ENCODE measurements at regions of chr5 and their contacts with region 1.

Region 1: GRCh38 chr5:74766849-74767578 is at the starts of genes GFM2 and NSA2:
- DNase-seq: peak; percentile 95
- ATAC-seq: peak; percentile 85
- H3K4me3 Mint-ChIP-seq: peak within 1 kb of the TSS; percentile 94
- H3K27ac Mint-ChIP-seq: peak within 1 kb of the TSS; percentile 99
- H3K4me1 Mint-ChIP-seq: peaks cover 34% of the 10 kb centered on the region
- H3K27me3 Mint-ChIP-seq: no peaks in the 10 kb centered on the region
- total RNA-seq, gene GFM2: 34.7 to 40.4 TPM
- total RNA-seq, gene NSA2: 163 to 253 TPM

Region 2: DNA sequence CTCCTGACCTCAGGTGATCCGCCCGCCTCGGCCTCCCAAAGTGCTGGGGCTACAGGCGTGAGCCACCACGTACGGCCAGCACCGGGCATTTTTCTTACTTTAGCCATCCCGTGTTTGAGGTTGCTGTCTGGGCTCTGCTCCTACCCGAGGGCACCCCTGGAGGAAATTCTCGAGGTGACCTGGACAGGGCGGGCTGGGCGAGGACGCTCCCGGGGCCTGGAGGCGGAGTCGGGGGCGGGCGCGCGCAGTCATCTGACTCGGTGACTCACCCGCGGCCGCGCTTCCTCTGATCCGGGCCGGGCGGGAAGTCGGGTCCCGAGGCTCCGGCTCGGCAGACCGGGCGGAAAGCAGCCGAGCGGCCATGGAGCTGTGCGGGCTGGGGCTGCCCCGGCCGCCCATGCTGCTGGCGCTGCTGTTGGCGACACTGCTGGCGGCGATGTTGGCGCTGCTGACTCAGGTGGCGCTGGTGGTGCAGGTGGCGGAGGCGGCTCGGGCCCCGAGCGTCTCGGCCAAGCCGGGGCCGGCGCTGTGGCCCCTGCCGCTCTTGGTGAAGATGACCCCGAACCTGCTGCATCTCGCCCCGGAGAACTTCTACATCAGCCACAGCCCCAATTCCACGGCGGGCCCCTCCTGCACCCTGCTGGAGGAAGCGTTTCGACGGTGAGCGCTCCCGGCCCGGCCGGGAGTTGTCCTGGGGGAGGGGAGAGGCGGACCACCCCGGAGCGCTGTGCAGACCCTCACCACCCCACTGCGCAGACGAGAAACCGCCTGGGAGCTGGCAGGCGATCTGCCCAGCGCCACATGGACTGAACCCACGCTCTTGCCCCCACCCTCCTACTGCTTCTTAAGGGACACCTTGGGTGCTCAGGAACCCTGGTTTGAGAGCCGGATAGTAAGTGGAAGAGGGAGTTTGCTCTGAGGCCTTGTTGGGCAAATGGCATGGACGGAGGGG is 81.8 kb before region 1 on chr5 and contains the start of gene HEXB:
- CTCF ChIA-PET with region 1: interaction called, 3 read pairs
- POLR2A ChIA-PET with region 1: interaction called, 4 read pairs
- intact Hi-C with region 1: loop called (anchors 1 to 2 kb)
- DNase-seq: peak; percentile 94
- ATAC-seq: peak; percentile 98
- H3K4me3 Mint-ChIP-seq: peak within 1 kb of the TSS; percentile 73
- H3K27ac Mint-ChIP-seq: peak within 1 kb of the TSS; percentile 87
- H3K4me1 Mint-ChIP-seq: peaks cover 21% of the 10 kb centered on the region
- H3K27me3 Mint-ChIP-seq: no peaks in the 10 kb centered on the region
- total RNA-seq, gene HEXB: 42.6 to 47.6 TPM

Region 3: GRCh38 chr5:74865804-74866595 is 99.0 kb after region 1 on chr5 and contains the start of gene FAM169A:
- CTCF ChIA-PET with region 1: no interaction called
- POLR2A ChIA-PET with region 1: no interaction called
- intact Hi-C with region 1: loop called (anchors 1 to 5 kb)
- DNase-seq: peak; percentile 65
- ATAC-seq: peak; percentile 69
- H3K4me3 Mint-ChIP-seq: peak within 1 kb of the TSS; percentile 92
- H3K27ac Mint-ChIP-seq: peak within 1 kb of the TSS; percentile 95
- H3K4me1 Mint-ChIP-seq: peaks cover 29% of the 10 kb centered on the region
- H3K27me3 Mint-ChIP-seq: peaks cover 2% of the 10 kb centered on the region
- total RNA-seq, gene FAM169A: 6.1 to 9.1 TPM

Region 4: DNA sequence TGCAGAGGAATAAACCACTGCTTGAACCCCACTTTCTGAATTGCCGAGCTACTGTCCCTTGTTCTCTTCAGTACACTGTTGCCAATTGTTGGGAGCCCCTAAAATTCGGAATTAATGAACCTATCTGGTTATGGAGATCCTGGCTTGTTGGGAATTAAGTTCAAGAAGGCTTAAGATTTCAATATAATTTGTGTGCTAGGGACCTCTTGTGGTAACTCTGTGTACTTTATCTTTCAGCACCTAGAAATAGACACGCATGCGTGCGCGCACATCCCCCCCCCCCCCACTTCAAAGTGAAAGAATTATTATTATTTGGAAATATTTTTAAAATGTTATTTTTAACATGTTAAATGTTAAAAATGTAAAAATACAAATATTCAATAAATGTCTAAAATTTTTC is 152.5 kb after region 1 on chr5:
- CTCF ChIA-PET with region 1: interaction called, 7 read pairs
- POLR2A ChIA-PET with region 1: no interaction called
- intact Hi-C with region 1: loop called (anchors 1 kb)
- DNase-seq: peak; percentile 20
- ATAC-seq: no peak
- H3K4me3 Mint-ChIP-seq: no peak overlapping the region
- H3K27ac Mint-ChIP-seq: no peak overlapping the region
- H3K4me1 Mint-ChIP-seq: no peaks in the 10 kb centered on the region
- H3K27me3 Mint-ChIP-seq: peaks cover 7% of the 10 kb centered on the region

Region 5: DNA sequence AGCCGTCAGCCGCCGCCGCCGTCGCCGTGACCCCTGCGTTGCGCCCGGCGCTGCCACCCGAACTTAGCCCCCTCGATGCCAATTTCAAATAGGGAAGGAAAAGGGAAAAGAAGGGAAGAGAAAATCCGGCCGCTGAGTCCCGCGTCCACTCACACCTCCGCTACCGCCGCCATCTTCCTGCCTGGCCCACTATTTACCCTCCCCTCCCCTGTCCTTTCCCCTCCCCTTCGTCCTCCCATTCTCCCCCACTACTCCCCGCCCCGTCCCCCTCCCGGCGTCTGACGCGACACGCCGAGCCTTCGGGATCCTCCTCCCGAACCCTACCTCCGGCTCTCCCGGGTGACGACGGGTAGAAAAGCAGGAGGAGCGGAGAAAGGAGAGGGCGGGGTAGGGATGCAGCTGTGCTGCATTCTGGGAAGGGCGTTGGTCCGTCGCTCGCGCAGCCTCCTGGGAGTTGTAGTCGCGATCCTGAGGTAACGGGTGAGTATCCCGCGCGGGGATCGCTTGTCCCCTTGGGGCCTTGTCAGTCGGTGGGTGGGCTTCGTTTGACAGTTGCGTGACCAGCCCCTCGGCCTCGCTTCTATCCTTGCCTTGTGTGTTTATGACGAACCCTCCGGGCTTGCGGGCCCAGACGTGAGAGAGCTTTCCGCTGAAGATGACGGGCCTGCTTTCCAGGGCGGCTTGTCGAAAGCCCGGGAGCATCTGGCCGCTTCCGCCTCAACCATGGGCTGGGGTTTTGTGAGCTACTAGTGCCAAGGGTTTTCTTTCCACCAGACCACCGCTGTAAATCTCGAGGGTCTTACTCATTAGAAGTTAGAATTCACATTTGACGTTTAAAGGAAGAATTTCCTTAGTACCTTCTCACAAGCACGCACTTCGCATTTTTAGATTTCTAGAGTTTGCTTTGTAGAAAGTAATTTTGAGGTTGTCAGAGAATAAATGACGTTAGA is 744.7 kb after region 1 on chr5 and contains the starts of genes CERT1 and POLK:
- CTCF ChIA-PET with region 1: no interaction called
- POLR2A ChIA-PET with region 1: no interaction called
- intact Hi-C with region 1: loop called in 1 of 2 experiments (anchors 1 kb)
- DNase-seq: peak; percentile 98
- ATAC-seq: peak; percentile 96
- H3K4me3 Mint-ChIP-seq: peak within 1 kb of the TSS; percentile 98
- H3K27ac Mint-ChIP-seq: peak within 1 kb of the TSS; percentile 96
- H3K4me1 Mint-ChIP-seq: peaks cover 47% of the 10 kb centered on the region
- H3K27me3 Mint-ChIP-seq: no peaks in the 10 kb centered on the region
- total RNA-seq, gene CERT1: 21.6 to 24.5 TPM
- total RNA-seq, gene POLK: 35.5 to 49.1 TPM

Measured in activated CD4-positive, alpha-beta T cell treated with anti-CD3 and anti-CD28 coated beads for 36 hours (primary cell).